WTC11 (cell line): ENCODE measurements at regions of chr5 and their contacts with region 1.

Region 1: DNA sequence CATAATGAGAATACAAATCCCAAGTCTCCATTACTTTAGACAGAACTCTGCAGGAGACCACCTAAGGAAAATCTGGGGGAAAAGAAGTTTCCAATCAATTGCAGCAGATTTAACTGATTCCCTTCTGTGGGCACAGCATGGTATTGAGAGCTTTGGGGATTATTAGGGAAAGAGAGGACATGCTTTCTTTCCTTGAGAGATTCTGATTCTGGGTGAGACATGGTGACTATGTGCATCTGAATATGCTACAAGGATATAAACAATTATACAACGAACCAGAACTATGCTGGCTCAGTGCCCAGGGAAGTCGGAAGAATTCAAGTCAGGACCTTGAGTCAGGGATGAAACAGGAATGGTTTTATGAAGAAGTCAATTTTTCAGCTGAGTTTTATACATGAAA is 183.7 kb downstream of the PDE4D start:
- DNase-seq: no peak
- ATAC-seq: peak; percentile 55
- H3K4me3 Mint-ChIP-seq: peak overlapping the region; percentile 43
- H3K27ac Mint-ChIP-seq: peak overlapping the region; percentile 96
- H3K4me1 Mint-ChIP-seq: peaks cover 59% of the 10 kb centered on the region
- H3K27me3 Mint-ChIP-seq: no peaks in the 10 kb centered on the region
- CTCF ChIP-seq: no peak

Region 2: DNA sequence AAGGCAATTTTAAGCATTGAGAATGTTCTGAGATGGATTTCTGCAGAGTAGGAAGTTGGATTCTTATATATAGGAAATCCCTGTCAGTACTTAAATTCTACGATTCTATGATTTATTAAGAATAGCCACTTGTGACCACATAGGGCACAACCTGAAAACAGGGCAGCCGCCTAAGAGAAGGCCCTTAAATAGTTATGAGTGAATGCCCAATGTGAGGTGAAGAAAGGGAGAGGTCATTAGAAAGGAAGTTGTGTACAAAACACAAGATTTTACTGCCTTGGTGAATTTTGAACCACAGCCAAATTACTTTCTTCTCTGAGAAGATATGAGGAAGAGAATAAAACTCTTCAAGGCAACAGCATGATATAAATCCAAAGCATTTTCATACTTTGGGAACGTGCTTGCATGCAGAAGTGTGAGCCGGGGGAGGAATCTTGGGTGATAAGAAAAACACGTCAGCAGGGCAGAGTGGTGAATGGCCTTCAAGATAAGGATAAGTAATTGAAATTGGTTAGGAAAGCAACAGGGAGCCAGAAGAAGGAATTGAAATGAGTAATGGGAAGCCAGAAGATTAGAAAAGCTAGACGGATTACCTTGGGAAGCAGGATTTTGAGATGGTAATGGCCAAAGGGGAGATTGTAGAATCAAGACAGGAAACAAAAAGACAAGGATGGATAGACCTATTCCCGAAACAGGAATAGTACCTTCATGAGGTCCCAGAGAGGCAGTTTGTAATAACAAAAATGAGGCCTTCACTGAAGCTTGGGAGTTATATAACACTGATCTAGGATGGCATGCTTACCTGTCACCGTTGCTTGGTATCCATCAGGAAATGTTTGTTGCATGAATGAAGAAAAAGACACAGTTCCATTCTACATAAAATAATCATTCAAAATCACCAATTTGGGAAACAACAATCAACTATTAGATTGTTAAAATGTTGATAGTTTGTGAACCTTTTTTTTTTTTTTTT is 60.6 kb before region 1 on chr5:
- CTCF ChIA-PET with region 1: no interaction called
- POLR2A ChIA-PET with region 1: interaction called, 10 read pairs
- DNase-seq: no peak
- ATAC-seq: peak; percentile 24
- H3K4me3 Mint-ChIP-seq: no peak overlapping the region
- H3K27ac Mint-ChIP-seq: no peak overlapping the region; the same call in 1 of the 2 replicates
- H3K4me1 Mint-ChIP-seq: peaks cover 8% of the 10 kb centered on the region
- H3K27me3 Mint-ChIP-seq: no peaks in the 10 kb centered on the region
- CTCF ChIP-seq: no peak

Region 3: DNA sequence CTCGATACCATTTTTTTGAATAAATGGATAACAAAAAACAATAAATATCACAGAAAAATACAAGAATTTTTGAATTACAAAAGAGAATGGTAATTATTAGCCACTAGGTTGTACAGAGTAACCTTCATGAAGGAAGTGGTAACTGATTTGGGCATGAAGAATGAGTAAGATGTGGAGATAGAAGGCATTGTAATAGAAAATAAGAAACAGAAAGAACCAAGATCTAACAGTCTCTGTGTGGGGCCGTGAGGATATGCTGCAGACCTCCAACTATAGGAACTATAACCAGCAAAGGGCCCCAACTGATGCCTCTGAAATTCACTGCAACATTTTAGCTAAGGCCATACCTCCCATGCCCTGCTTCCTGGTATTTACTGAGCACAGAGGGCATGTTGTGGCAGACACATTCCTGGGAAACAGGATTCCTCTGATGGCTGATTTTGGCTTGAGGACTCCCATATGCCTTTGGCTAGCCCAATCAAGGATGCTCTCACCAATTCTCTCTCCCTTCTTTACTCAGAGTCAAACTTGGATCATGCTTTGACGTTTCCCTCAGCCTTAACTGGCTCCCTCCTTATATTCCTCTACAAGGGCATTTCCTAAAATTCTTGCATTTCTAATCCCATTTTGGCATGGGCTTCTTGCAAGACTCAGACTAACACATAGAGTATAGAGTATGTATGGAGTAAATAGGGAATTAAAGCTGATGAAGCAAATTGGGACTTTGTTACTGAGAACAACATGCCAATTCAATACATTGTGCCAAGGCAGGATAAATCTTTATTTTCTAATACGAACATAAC is 25.3 kb before region 1 on chr5:
- CTCF ChIA-PET with region 1: no interaction called
- POLR2A ChIA-PET with region 1: no interaction called
- DNase-seq: no peak
- ATAC-seq: peak; percentile 69
- H3K4me3 Mint-ChIP-seq: no peak overlapping the region
- H3K27ac Mint-ChIP-seq: no peak overlapping the region
- H3K4me1 Mint-ChIP-seq: peaks cover 7% of the 10 kb centered on the region; the same call in 1 of the 2 replicates
- H3K27me3 Mint-ChIP-seq: no peaks in the 10 kb centered on the region
- CTCF ChIP-seq: no peak

Region 4: DNA sequence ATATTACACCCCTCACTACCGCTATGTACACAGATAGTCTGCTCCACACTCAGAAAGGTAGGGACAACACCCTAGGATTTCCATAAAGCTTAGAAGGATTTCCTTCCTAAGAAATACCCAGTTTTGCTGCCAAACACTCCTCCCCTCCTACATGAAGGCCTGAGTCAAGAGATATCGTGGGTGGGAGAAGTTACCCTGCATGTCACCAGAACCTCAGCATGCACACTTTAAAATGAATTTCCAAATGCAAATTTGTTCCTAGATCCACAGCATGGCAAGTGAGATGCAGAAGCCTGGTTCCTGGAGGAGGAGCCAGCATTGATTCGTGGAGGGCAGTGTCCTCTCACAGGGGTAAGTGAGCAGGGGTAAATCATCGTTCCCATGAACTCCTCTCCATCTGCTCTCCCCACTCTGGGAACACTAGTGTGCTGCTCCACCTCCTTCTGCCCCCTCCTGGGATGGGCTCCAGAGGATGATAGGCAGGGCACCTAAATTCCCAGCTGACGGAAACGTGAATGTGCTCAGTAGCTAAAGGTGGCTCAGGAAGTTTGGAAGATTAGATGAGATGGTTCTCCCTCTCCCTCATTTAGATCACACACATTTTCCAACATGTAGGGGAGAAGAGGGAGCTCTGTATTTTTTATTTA is 106.9 kb after region 1 on chr5:
- CTCF ChIA-PET with region 1: no interaction called
- POLR2A ChIA-PET with region 1: no interaction called
- DNase-seq: no peak
- ATAC-seq: no peak
- H3K4me3 Mint-ChIP-seq: no peak overlapping the region
- H3K27ac Mint-ChIP-seq: no peak overlapping the region
- H3K4me1 Mint-ChIP-seq: no peaks in the 10 kb centered on the region
- H3K27me3 Mint-ChIP-seq: peaks cover 2% of the 10 kb centered on the region; the same call in 1 of the 2 replicates
- CTCF ChIP-seq: no peak

Region 5: GRCh38 chr5:59891962-59892643 is 182.3 kb after region 1 on chr5:
- CTCF ChIA-PET with region 1: no interaction called
- POLR2A ChIA-PET with region 1: no interaction called
- DNase-seq: no peak
- ATAC-seq: no peak
- H3K4me3 Mint-ChIP-seq: peak overlapping the region; percentile 71
- H3K27ac Mint-ChIP-seq: no peak overlapping the region
- H3K4me1 Mint-ChIP-seq: peaks cover 21% of the 10 kb centered on the region
- H3K27me3 Mint-ChIP-seq: peaks cover 66% of the 10 kb centered on the region
- CTCF ChIP-seq: no peak